ENCODE measurements at regions of chrX and their contacts with region 1.

Region 1: GRCh38 chrX:146186540-146186939 is 368.9 kb downstream of the SLITRK2 start:
- DNase-seq: peak; percentile 33
- H3K4me3 Mint-ChIP-seq: no peak overlapping the region
- H3K27ac Mint-ChIP-seq: no peak overlapping the region
- H3K4me1 Mint-ChIP-seq: peaks cover 4% of the 10 kb centered on the region
- H3K27me3 Mint-ChIP-seq: no peaks in the 10 kb centered on the region
- CTCF ChIP-seq: no peak

Region 2: GRCh38 chrX:145923376-145923775 is 263.2 kb before region 1 on chrX:
- CTCF ChIA-PET with region 1: no interaction called
- POLR2A ChIA-PET with region 1: no interaction called
- intact Hi-C with region 1: loop called (anchors 5 kb)
- DNase-seq: no peak
- H3K4me3 Mint-ChIP-seq: no peak overlapping the region
- H3K27ac Mint-ChIP-seq: no peak overlapping the region
- H3K4me1 Mint-ChIP-seq: no peaks in the 10 kb centered on the region
- H3K27me3 Mint-ChIP-seq: no peaks in the 10 kb centered on the region
- CTCF ChIP-seq: no peak

Measured in MCF 10A (cell line).